Heart left ventricle (tissue), 16 donors: ENCODE measurements at regions of chr2 and their contacts with region 1.

Region 1: DNA sequence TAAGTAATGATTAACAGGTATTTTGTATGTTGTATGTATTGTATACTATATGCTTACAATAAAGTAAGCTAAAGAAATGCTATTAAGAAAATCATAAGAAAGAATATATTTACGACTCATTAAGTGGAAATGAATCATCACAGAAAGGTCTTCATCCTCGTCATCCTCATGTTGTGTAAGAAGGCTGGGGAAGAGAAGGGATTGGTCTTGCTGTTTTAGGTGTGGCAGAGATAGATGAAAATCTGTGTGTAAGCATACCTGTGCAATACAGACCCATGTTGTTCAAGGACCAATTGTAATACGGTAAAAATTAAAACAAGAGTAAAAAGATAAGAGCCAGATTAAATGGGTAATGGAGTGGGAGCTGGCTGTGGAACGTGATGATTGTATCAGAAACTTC is 16.6 kb downstream of the SLC35F5 start:
- DNase-seq: no peak
- ATAC-seq: no peak
- H3K4me3 ChIP-seq: no peak overlapping the region
- H3K27ac ChIP-seq: no peak overlapping the region
- H3K4me1 ChIP-seq: no peaks in the 10 kb centered on the region
- H3K27me3 ChIP-seq: no peaks in the 10 kb centered on the region
- CTCF ChIP-seq: no peak
- POLR2A ChIP-seq: no peak

Region 2: DNA sequence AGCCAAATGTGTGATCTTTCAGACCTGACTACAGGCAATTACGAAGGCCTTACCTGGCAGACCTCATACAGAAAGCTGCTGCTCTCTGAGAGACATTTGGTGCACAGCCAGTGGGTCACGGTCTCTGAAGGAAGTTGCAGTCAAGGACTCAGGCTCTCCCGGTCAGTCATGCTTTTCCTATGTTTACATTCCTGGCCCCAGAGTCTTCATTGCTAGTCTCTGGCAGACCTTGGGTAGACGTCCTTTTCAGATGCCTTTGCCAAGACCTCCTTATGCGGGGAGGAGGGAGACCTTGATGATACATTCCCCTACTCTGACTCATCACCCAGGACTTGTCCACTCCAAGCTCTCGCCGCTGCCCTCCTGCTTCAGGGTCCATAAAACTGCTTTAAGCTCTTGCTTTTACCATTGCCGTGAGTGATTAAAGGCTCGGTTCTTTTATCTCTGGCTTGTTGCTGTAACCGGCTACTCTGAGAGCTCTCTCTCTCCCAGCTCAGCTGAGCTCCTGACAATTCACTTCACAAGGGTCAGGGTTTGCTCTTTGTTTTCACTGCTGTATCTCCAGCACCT is 78.6 kb after region 1 on chr2:
- intact Hi-C with region 1: no loop called
- DNase-seq: peak in 4 of 5 donors; percentile 18 to 63 (median 42)
- ATAC-seq: peak; percentile 79 to 97 (median 88)
- H3K4me3 ChIP-seq: peak overlapping the region in 8 of 12 donors; percentile 12 to 49 (median 30)
- H3K27ac ChIP-seq: peak overlapping the region; percentile 38 to 84 (median 67)
- H3K4me1 ChIP-seq: peaks cover 0 to 16% (median 2%) of the 10 kb centered on the region in 12 donors
- H3K27me3 ChIP-seq: no peaks in the 10 kb centered on the region
- CTCF ChIP-seq: no peak
- POLR2A ChIP-seq: no peak

Region 3: GRCh38 chr2:113940891-113941290 is 201.0 kb after region 1 on chr2:
- intact Hi-C with region 1: loop called in 1 of 10 experiments (anchors 5 kb)
- DNase-seq: no peak
- ATAC-seq: no peak
- H3K4me3 ChIP-seq: no peak overlapping the region
- H3K27ac ChIP-seq: no peak overlapping the region
- H3K4me1 ChIP-seq: no peaks in the 10 kb centered on the region
- H3K27me3 ChIP-seq: no peaks in the 10 kb centered on the region
- CTCF ChIP-seq: no peak
- POLR2A ChIP-seq: no peak

Region 4: DNA sequence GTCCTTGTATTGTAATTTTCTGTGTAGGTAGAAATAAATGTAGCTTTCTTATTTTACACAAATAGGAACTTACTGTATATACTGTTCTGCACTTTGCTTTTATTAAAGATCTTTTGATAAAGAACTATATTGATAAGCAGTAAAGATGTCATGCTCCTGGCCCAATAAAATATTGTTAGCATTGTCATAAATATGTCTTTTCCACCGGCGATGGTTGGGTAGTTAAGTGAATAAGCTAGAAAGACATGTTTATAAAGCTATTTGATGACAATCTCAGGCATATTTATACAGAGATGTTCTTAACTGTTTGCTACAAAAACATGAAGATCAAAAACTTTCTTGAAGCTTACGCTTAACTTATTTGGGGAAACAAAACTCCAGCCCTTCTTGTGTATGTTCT is 219.4 kb after region 1 on chr2:
- intact Hi-C with region 1: loop called in 1 of 10 experiments (anchors 10 kb)
- DNase-seq: no peak
- ATAC-seq: no peak
- H3K4me3 ChIP-seq: no peak overlapping the region
- H3K27ac ChIP-seq: no peak overlapping the region
- H3K4me1 ChIP-seq: no peaks in the 10 kb centered on the region
- H3K27me3 ChIP-seq: no peaks in the 10 kb centered on the region
- CTCF ChIP-seq: no peak
- POLR2A ChIP-seq: no peak